Activated CD8-positive, alpha-beta memory T cell treated with anti-CD3 and anti-CD28 coated beads, Interleukin-2, amount 10 ng/mL, durations not matched to agents 7 days and 5 days (primary cell): ENCODE measurements at regions of chr7 and their contacts with region 1.

Region 1: GRCh38 chr7:620052-620451 is 100.4 kb upstream of the PDGFA start:
- DNase-seq: no peak
- ATAC-seq: peak; percentile 30
- H3K4me3 Mint-ChIP-seq: peak overlapping the region; percentile 9
- H3K27ac Mint-ChIP-seq: peak overlapping the region; percentile 100
- H3K4me1 Mint-ChIP-seq: peaks cover 44% of the 10 kb centered on the region
- H3K27me3 Mint-ChIP-seq: no peaks in the 10 kb centered on the region

Region 2: GRCh38 chr7:264541-265191 is 355.4 kb before region 1 on chr7:
- CTCF ChIA-PET with region 1: no interaction called
- DNase-seq: no peak
- ATAC-seq: no peak
- H3K4me3 Mint-ChIP-seq: no peak overlapping the region
- H3K27ac Mint-ChIP-seq: no peak overlapping the region
- H3K4me1 Mint-ChIP-seq: peaks cover 6% of the 10 kb centered on the region
- H3K27me3 Mint-ChIP-seq: no peaks in the 10 kb centered on the region

Region 3: DNA sequence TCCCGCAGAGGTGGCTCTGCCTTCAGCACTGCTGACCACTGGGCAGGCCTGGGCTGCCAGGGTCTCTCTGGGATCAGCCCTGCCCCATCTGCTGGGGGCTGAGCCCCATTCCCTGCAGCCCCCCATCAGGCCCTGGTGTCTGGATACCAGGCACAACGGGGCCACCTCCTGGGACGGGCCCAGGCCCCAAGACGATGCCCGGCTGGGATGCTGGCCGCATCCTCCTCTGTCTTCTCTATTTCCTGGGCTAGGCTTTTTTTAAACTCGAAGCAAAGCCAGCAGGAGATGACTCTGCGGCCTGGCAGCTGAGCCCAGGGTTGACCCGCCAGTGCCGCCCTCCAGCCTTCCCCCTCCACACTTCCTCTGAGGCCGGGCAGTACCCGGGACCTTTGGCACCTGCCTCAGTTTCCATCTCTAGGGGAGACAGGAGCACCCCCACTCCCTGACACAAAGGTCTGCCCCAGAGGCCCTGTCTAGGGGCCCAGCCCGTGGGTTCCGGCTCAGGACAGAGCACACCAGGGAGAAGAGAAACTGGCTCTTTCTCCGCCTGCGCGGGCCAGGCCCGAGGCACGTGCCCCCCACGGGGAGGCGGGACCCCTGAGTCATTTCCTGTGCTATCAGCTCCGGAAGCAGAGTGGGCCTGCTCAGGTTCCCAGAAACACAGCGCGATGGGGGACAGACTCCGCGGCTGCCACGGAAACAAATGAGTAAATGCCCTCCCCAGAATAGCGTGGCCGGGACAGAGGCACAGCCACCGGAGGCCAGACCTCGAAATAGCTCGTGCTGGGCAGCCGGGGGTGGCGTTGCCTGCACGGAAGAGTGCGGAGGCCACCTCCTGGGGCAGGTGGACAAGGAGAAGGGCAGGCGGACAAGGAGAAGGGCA is 15.8 kb before region 1 on chr7:
- CTCF ChIA-PET with region 1: interaction called, 39 read pairs
- DNase-seq: peak; percentile 98
- ATAC-seq: peak; percentile 84
- H3K4me3 Mint-ChIP-seq: peak overlapping the region; percentile 86
- H3K27ac Mint-ChIP-seq: peak overlapping the region; percentile 99
- H3K4me1 Mint-ChIP-seq: peaks cover 64% of the 10 kb centered on the region
- H3K27me3 Mint-ChIP-seq: no peaks in the 10 kb centered on the region

Region 4: GRCh38 chr7:668139-668931 is 48.3 kb after region 1 on chr7:
- CTCF ChIA-PET with region 1: no interaction called
- DNase-seq: no peak
- ATAC-seq: no peak
- H3K4me3 Mint-ChIP-seq: no peak overlapping the region
- H3K27ac Mint-ChIP-seq: no peak overlapping the region
- H3K4me1 Mint-ChIP-seq: no peaks in the 10 kb centered on the region
- H3K27me3 Mint-ChIP-seq: no peaks in the 10 kb centered on the region